ENCODE measurements at regions of chr12 and their contacts with region 1.

Region 1: GRCh38 chr12:88993651-88994050 is 358.6 kb downstream of the DUSP6 start:
- DNase-seq: peak; percentile 77

Region 2: DNA sequence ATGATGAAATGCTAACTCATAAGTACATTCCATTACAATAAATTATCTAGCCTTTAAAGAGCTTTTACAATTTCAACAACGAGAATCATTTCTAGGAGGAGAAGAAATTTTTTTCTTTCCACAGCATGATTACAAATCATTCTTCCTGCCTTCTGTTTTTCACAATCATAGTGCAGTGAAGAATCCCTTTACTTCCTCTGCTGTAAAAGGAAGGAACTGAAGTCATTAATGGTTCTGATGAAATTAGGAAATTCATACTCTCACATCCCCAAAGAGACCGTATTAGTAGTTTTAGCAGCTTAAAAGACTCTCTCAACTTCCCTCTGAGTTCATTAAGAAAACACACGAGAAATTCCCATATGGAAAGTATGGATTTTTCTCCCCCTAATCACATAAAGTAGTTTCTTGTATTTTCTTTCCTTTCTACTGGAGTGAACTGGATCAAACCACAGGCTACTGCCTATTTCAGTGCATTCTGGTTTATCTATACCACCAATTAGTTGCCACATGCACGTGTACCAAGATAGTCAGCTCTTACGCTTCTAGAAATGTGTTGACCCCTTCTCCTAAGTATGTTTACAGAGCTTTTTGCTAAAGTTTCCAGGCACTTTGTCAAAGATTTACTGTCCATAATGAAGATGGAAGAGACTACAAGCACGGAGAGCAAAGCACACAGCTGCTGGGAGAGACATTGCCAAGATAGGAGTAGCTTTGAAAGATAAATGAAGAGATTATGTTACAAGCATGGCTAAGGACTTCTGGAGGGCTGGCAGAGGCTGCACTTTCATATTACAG is 354.5 kb before region 1 on chr12:
- in situ Hi-C with region 1: loop called (anchors 25 kb)
- DNase-seq: no peak